Sciatic nerve (tissue), 2 donors: ENCODE measurements at regions of chr10 and their contacts with region 1.

Region 1: GRCh38 chr10:102917962-102918816 is at the start of gene CNNM2:
- DNase-seq: peak; percentile 100
- ATAC-seq: peak; percentile 99
- total RNA-seq, gene CNNM2: 11.1 TPM

Region 2: GRCh38 chr10:103244663-103245271 is 326.6 kb after region 1 on chr10:
- intact Hi-C with region 1: loop called (anchors 5 kb)
- DNase-seq: peak; percentile 84
- ATAC-seq: peak; percentile 95